ENCODE measurements at regions of chr4 and their contacts with region 1.

Region 1: DNA sequence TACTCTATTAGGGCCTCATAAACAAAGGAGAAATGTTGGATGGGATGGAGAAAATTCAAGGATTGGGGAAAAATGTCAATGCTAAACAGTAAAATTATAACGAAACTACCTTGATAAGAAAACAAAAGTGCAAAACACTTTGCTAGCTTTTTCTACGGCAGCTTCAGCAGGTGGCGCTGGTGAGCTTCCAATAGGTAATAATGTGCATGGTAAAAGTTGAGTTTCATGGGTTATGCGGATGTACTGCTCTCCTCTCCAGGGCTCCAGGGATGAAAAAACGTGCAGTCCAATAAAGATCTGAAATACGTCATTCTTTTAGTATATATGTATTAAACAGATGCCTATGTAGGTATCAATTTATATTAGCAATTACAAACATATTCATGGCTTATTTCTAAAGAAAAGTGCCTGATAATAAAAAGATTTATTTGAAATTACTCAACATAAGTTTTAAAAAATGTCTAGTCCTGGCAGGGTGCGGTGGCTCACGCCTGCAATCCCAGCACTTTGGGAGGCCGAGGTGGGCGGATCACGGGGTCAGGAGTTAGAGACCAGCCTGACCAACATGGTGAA is 239.6 kb downstream of the GRXCR1 start:
- DNase-seq: peak; percentile 3
- ATAC-seq: peak; percentile 75
- H3K4me3 ChIP-seq: no peak overlapping the region
- H3K27ac ChIP-seq: no peak overlapping the region
- H3K4me1 ChIP-seq: no peaks in the 10 kb centered on the region
- H3K27me3 ChIP-seq: no peaks in the 10 kb centered on the region
- CTCF ChIP-seq: peak; percentile 80 to 93 (median 81); a peak in 5 of 6 replicates
- EP300 ChIP-seq: no peak
- POLR2A ChIP-seq: no peak
- RAD21 ChIP-seq: peak; percentile 90

Region 2: DNA sequence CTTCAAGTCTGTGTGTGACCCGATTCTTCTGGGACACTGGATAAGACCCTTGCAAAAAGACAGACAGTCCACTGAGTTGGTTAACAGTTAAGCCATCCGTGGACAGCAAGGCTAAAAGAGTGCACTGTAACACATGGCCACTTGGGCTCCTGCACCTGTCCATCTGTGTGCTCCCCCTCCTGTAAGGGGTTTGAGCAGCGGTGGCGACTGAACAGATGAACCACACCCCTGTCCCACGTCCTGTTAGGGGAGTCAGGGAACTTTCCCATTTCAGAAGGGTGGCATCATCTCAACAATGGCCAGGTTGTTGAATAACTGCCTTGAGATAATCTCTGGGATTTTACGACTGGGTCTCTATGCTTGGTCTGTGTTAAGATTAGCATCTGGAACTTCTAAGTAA is 61.0 kb before region 1 on chr4:
- CTCF ChIA-PET with region 1: no interaction called
- POLR2A ChIA-PET with region 1: no interaction called
- RAD21 ChIA-PET with region 1: no interaction called
- SMC1A ChIA-PET with region 1: no interaction called
- in situ Hi-C with region 1: no loop called
- intact Hi-C with region 1: no loop called
- DNase-seq: no peak
- ATAC-seq: no peak
- H3K4me3 ChIP-seq: no peak overlapping the region
- H3K27ac ChIP-seq: no peak overlapping the region
- H3K4me1 ChIP-seq: no peaks in the 10 kb centered on the region
- H3K27me3 ChIP-seq: no peaks in the 10 kb centered on the region
- CTCF ChIP-seq: no peak
- EP300 ChIP-seq: no peak
- POLR2A ChIP-seq: no peak
- RAD21 ChIP-seq: no peak

Region 3: GRCh38 chr4:43456383-43456782 is 324.3 kb after region 1 on chr4:
- CTCF ChIA-PET with region 1: no interaction called
- POLR2A ChIA-PET with region 1: interaction called, 4 read pairs
- RAD21 ChIA-PET with region 1: no interaction called
- SMC1A ChIA-PET with region 1: no interaction called
- in situ Hi-C with region 1: loop called (anchors 10 kb)
- intact Hi-C with region 1: no loop called
- DNase-seq: no peak
- ATAC-seq: no peak
- H3K4me3 ChIP-seq: no peak overlapping the region
- H3K27ac ChIP-seq: no peak overlapping the region
- H3K4me1 ChIP-seq: no peaks in the 10 kb centered on the region
- H3K27me3 ChIP-seq: no peaks in the 10 kb centered on the region
- CTCF ChIP-seq: no peak
- EP300 ChIP-seq: no peak
- POLR2A ChIP-seq: no peak
- RAD21 ChIP-seq: no peak

Region 4: GRCh38 chr4:43471950-43472349 is 339.9 kb after region 1 on chr4:
- CTCF ChIA-PET with region 1: interaction called, 4 read pairs
- POLR2A ChIA-PET with region 1: no interaction called
- RAD21 ChIA-PET with region 1: no interaction called
- SMC1A ChIA-PET with region 1: interaction called, 5 read pairs
- in situ Hi-C with region 1: loop called (anchors 10 kb)
- intact Hi-C with region 1: loop called (anchors 2 kb)
- DNase-seq: no peak
- ATAC-seq: no peak
- H3K4me3 ChIP-seq: no peak overlapping the region
- H3K27ac ChIP-seq: no peak overlapping the region
- H3K4me1 ChIP-seq: no peaks in the 10 kb centered on the region
- H3K27me3 ChIP-seq: no peaks in the 10 kb centered on the region
- CTCF ChIP-seq: peak in 1 of 3 experiments; percentile 24; a peak in 3 of 6 replicates
- EP300 ChIP-seq: no peak
- POLR2A ChIP-seq: no peak
- RAD21 ChIP-seq: peak; percentile 49

Region 5: GRCh38 chr4:43547561-43547960 is 415.5 kb after region 1 on chr4:
- CTCF ChIA-PET with region 1: no interaction called
- POLR2A ChIA-PET with region 1: no interaction called
- RAD21 ChIA-PET with region 1: no interaction called
- SMC1A ChIA-PET with region 1: no interaction called
- in situ Hi-C with region 1: no loop called
- intact Hi-C with region 1: no loop called
- DNase-seq: no peak
- ATAC-seq: no peak
- H3K4me3 ChIP-seq: no peak overlapping the region
- H3K27ac ChIP-seq: no peak overlapping the region
- H3K4me1 ChIP-seq: no peaks in the 10 kb centered on the region
- H3K27me3 ChIP-seq: no peaks in the 10 kb centered on the region
- CTCF ChIP-seq: no peak
- EP300 ChIP-seq: no peak
- POLR2A ChIP-seq: no peak
- RAD21 ChIP-seq: no peak

Region 6: DNA sequence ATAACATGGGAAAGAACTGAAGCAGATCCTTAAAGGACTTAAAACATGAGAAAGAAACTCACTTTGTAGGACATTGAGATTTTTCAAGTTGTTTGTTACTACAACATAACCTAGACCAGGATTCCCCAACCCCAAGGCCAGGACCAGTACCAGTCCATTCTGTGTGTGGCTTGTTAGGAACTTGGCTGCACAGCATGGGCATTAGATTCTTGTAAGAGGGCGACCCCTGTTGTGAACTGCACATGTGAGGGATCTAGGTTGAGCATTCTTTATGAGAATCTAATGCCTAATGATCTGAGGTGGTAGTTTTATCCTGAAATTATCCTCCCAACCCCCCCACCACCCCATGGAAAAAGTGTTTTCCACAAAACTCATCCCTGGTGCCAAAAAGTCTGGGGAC is 750.4 kb after region 1 on chr4:
- CTCF ChIA-PET with region 1: no interaction called
- POLR2A ChIA-PET with region 1: no interaction called
- RAD21 ChIA-PET with region 1: no interaction called
- SMC1A ChIA-PET with region 1: interaction called, 3 read pairs
- in situ Hi-C with region 1: no loop called
- intact Hi-C with region 1: loop called (anchors 10 kb)
- DNase-seq: no peak
- ATAC-seq: 0 out of 3 replicates have a peak, but pooled peaks have one; percentile 42
- H3K4me3 ChIP-seq: no peak overlapping the region
- H3K27ac ChIP-seq: no peak overlapping the region
- H3K4me1 ChIP-seq: no peaks in the 10 kb centered on the region
- H3K27me3 ChIP-seq: no peaks in the 10 kb centered on the region
- CTCF ChIP-seq: peak in 1 of 3 experiments; percentile 35; a peak in 2 of 6 replicates
- EP300 ChIP-seq: no peak
- POLR2A ChIP-seq: no peak
- RAD21 ChIP-seq: peak; percentile 41

Measured in GM12878 (cell line).